ENCODE measurements at regions of chr7 and their contacts with region 1.

Region 1: GRCh38 chr7:30564243-30564892 is 30.3 kb upstream of the GARS1 start:
- DNase-seq: peak; percentile 77 to 87
- ATAC-seq: peak; percentile 95 to 98 (median 96)
- H3K4me3 ChIP-seq: no peak overlapping the region
- H3K27ac ChIP-seq: no peak overlapping the region
- H3K4me1 ChIP-seq: no peaks in the 10 kb centered on the region
- H3K27me3 ChIP-seq: no peaks in the 10 kb centered on the region
- CTCF ChIP-seq: peak; percentile 91

Region 2: GRCh38 chr7:30164567-30164966 is 399.8 kb before region 1 on chr7:
- intact Hi-C with region 1: loop called in 1 of 2 experiments (anchors 10 kb)
- DNase-seq: no peak
- ATAC-seq: peak; percentile 75 to 90 (median 78)
- H3K4me3 ChIP-seq: no peak overlapping the region
- H3K27ac ChIP-seq: no peak overlapping the region
- H3K4me1 ChIP-seq: peaks cover 18% of the 10 kb centered on the region
- H3K27me3 ChIP-seq: no peaks in the 10 kb centered on the region
- CTCF ChIP-seq: peak; percentile 64

Region 3: DNA sequence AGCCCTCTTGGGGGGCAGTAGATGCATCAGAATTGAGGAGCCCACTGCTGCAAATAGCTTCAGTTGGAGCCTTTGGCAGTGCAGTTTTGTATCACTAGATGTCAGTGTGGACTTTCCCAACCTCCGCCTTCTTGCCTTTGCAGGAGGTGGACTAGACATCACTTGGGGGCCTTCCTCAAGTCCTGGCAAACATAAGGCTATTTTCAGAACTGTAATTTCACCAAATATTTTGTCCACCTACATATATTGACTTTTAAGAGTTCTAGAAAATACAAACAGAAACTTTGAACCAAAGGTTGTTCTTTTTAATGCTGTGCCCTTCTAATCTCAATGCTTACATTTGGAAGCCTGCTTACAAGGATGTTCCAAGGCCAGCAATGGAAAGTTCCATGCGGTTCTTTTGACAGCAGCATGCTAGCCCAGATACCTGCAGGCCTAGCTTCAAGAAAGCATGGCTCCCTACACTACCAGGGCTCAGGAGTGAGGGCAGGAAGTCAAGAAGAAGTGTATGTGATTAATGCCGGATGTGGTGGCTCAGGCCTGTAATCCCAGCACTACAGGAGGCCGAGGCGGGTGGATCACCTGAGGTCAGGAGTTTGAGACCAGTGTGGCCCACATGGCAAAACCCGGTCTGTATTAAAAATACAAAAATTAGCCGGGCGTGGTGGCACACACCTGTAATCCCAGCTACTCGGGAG is 288.0 kb before region 1 on chr7:
- intact Hi-C with region 1: loop called in 1 of 2 experiments (anchors 5 kb)
- DNase-seq: no peak
- ATAC-seq: peak; percentile 39 to 76 (median 52)
- H3K4me3 ChIP-seq: no peak overlapping the region
- H3K27ac ChIP-seq: no peak overlapping the region
- H3K4me1 ChIP-seq: peaks cover 22% of the 10 kb centered on the region
- H3K27me3 ChIP-seq: no peaks in the 10 kb centered on the region
- CTCF ChIP-seq: peak; percentile 72

Region 4: GRCh38 chr7:30493228-30493627 is 71.1 kb before region 1 on chr7:
- intact Hi-C with region 1: no loop called
- DNase-seq: no peak
- ATAC-seq: no peak
- H3K4me3 ChIP-seq: no peak overlapping the region
- H3K27ac ChIP-seq: no peak overlapping the region
- H3K4me1 ChIP-seq: no peaks in the 10 kb centered on the region
- H3K27me3 ChIP-seq: no peaks in the 10 kb centered on the region
- CTCF ChIP-seq: no peak

Region 5: GRCh38 chr7:30510124-30511075 is 54.0 kb before region 1 on chr7:
- intact Hi-C with region 1: loop called in 1 of 2 experiments (anchors 2 kb)
- DNase-seq: no peak
- ATAC-seq: peak in 2 of 4 donors; percentile 66
- H3K4me3 ChIP-seq: no peak overlapping the region
- H3K27ac ChIP-seq: no peak overlapping the region
- H3K4me1 ChIP-seq: no peaks in the 10 kb centered on the region
- H3K27me3 ChIP-seq: no peaks in the 10 kb centered on the region
- CTCF ChIP-seq: peak; percentile 71

Region 6: DNA sequence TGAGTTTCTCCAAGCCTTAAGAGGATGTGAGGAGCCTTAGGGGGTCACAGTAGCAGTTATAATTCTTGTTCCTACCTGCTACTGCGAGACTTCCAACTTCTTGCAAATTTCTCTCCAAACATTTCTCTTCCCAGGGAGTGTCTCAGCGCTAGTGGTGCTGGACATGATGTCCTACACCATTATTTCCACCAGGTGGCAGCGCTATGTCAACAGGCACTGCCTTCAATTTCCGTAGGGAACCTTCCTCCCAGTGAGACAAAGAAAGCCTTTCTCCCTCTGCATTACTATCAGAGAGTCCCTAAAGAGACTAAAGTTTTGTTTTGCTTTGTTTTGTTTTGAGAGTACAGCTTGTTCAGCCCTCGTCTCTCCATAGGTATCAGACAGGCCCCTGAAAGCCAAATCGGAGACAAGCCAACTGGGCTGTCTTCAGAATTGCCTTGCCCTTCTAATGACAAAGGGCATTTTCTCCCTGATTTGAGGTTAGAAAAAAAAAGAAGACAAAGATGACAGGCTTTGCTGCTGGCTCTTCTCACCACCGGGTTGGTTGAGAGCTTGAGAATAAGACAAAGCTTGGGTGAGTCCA is 15.5 kb before region 1 on chr7:
- intact Hi-C with region 1: loop called (anchors 2 kb)
- DNase-seq: peak in 1 of 2 donors; percentile 51
- ATAC-seq: peak; percentile 75 to 83 (median 81)
- H3K4me3 ChIP-seq: no peak overlapping the region
- H3K27ac ChIP-seq: peak overlapping the region; percentile 37
- H3K4me1 ChIP-seq: peaks cover 10% of the 10 kb centered on the region
- H3K27me3 ChIP-seq: no peaks in the 10 kb centered on the region
- CTCF ChIP-seq: peak; percentile 88

Measured in psoas muscle (tissue), 8 donors.